Psoas muscle (tissue), 8 donors: ENCODE measurements at regions of chr20 and their contacts with region 1.

Region 1: DNA sequence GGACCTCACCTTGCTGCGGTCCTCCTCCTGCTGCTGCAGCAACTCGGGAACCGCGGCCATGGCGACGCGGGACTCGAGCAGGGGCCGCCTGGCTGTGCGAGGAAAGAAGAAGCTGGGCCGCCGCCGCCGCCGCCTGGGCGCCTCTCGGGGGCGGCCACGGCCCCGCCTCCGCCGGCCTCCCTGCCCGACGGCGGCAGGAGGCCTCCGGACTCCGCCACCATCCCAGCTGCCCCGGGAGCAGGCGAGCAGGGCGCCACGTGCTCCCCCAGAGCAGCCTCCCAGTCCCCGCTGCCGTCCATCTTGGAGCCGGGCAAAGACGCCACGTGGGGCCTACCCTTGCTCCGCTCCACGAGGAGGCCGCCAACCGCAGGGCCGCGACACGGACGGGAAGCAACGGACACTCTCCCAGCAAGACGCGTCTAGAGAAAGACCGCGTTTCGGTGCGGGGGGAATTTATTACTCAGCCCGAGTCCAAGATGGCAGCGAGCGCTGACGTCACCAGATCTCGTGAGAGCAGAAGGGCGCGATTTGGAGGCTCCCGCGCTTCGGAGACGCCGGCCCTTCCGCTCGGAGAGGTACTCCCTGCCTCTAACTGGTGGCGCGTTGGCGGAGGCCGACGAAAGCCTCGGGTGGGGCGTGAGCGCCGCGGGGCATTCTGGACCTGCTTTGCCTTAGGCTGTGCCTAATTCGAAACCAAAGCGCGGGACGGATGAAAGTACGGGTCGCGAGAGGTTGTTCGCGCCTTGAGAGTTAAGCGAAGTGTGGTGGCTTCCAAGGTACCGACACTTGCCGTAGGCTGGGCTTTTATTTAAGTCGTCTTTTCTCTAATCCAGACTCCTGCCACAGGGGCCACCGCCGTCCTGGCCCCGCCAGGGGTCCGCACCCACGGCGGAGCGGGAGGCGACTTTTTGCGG is at the starts of genes MGME1 and SNX5:
- DNase-seq: peak; percentile 99 to 100
- ATAC-seq: peak; percentile 92 to 96 (median 92)
- H3K4me3 ChIP-seq: peak within 1 kb of the TSS; percentile 97
- H3K27ac ChIP-seq: peak within 1 kb of the TSS; percentile 98
- H3K4me1 ChIP-seq: peaks cover 54% of the 10 kb centered on the region
- H3K27me3 ChIP-seq: no peaks in the 10 kb centered on the region
- CTCF ChIP-seq: no peak
- total RNA-seq, gene MGME1: 8.6 to 21.8 (median 12.2) TPM
- total RNA-seq, gene SNX5: 59.8 to 81.3 (median 69.7) TPM

Region 2: GRCh38 chr20:16539280-16540021 is 1429.2 kb before region 1 on chr20:
- intact Hi-C with region 1: no loop called
- DNase-seq: no peak
- ATAC-seq: no peak
- H3K4me3 ChIP-seq: no peak overlapping the region
- H3K27ac ChIP-seq: no peak overlapping the region
- H3K4me1 ChIP-seq: peaks cover 14% of the 10 kb centered on the region
- H3K27me3 ChIP-seq: no peaks in the 10 kb centered on the region
- CTCF ChIP-seq: no peak

Region 3: DNA sequence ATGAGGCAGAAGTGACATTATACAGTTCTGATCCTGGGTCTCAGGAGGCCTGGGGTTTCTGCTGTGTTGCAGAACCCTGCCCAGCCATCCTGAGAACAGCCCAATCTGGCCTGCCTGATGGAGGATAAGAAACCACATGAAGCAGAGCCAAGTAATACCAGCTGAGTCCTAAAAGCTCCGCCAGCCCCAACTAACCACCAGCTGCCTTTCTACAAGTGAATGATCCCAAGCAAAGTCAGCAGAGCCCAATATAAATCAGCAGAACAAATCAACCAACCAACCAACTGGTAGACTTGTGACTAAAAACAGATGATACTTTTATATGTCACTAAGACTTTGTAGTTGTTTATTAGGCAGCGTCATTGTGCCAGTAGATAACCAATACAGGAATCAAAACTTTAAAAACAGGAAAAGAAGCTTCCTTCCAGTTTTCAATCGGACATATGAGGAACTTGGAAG is 52.2 kb before region 1 on chr20:
- intact Hi-C with region 1: loop called in 1 of 2 experiments (anchors 5 kb)
- DNase-seq: no peak
- ATAC-seq: peak in 2 of 4 donors; percentile 37 to 73
- H3K4me3 ChIP-seq: no peak overlapping the region
- H3K27ac ChIP-seq: peak overlapping the region; percentile 15
- H3K4me1 ChIP-seq: peaks cover 15% of the 10 kb centered on the region
- H3K27me3 ChIP-seq: no peaks in the 10 kb centered on the region
- CTCF ChIP-seq: no peak